PC-3 (cell line): ENCODE measurements at regions of chr5 and their contacts with region 1.

Region 1: GRCh38 chr5:90386099-90386710 is 23.4 kb downstream of the CETN3 start:
- DNase-seq: peak; percentile 70
- ATAC-seq: no peak; the same call in 1 of the 2 replicates
- H3K4me3 ChIP-seq: no peak overlapping the region
- H3K27ac ChIP-seq: no peak overlapping the region
- H3K4me1 ChIP-seq: peaks cover 9% of the 10 kb centered on the region
- H3K27me3 ChIP-seq: no peaks in the 10 kb centered on the region
- CTCF ChIP-seq: peak; percentile 72

Region 2: GRCh38 chr5:88826646-88827585 is 1559.3 kb before region 1 on chr5:
- CTCF ChIA-PET with region 1: no interaction called
- POLR2A ChIA-PET with region 1: no interaction called
- intact Hi-C with region 1: no loop called
- DNase-seq: peak; percentile 70
- ATAC-seq: peak; percentile 72
- H3K4me3 ChIP-seq: no peak overlapping the region
- H3K27ac ChIP-seq: peak overlapping the region; percentile 76
- H3K4me1 ChIP-seq: peaks cover 30% of the 10 kb centered on the region
- H3K27me3 ChIP-seq: no peaks in the 10 kb centered on the region
- CTCF ChIP-seq: no peak

Region 3: DNA sequence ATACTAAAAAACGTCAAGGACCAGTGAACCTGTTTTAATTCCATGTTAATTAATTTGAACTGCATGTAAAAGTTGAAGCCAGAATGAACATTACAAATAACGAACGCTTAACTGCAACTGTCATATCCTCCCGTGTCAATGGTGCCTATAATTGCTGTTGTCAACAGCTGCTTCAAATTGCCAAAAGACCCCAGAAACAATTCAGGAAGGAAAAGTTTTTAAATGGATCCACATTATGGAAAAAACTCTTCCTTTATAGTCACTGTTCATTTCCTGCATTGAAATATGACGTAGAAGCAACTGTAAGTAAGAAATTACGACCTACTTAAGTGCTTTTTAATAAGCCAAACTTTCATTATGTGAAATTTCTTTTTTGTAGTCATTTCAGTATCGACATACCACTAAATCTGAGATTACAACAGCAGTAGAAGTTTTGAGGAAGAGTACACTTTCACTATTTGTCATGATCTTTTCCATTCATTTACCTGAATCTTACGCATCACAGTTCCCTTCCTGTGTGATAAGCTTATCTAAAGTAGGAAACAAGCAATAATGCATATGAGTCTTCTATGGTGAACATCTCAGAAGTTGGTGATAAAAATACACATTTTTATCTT is 1541.0 kb before region 1 on chr5:
- CTCF ChIA-PET with region 1: no interaction called
- POLR2A ChIA-PET with region 1: no interaction called
- intact Hi-C with region 1: loop called (anchors 10 kb)
- DNase-seq: no peak
- ATAC-seq: no peak
- H3K4me3 ChIP-seq: no peak overlapping the region
- H3K27ac ChIP-seq: no peak overlapping the region
- H3K4me1 ChIP-seq: no peaks in the 10 kb centered on the region
- H3K27me3 ChIP-seq: no peaks in the 10 kb centered on the region
- CTCF ChIP-seq: no peak

Region 4: GRCh38 chr5:89930591-89931392 is 455.4 kb before region 1 on chr5:
- CTCF ChIA-PET with region 1: no interaction called
- POLR2A ChIA-PET with region 1: no interaction called
- intact Hi-C with region 1: loop called (anchors 5 kb)
- DNase-seq: peak; percentile 96
- ATAC-seq: peak; percentile 94
- H3K4me3 ChIP-seq: peak overlapping the region; percentile 10; the same call in 1 of the 2 replicates
- H3K27ac ChIP-seq: peak overlapping the region; percentile 52
- H3K4me1 ChIP-seq: peaks cover 21% of the 10 kb centered on the region
- H3K27me3 ChIP-seq: no peaks in the 10 kb centered on the region
- CTCF ChIP-seq: no peak

Region 5: DNA sequence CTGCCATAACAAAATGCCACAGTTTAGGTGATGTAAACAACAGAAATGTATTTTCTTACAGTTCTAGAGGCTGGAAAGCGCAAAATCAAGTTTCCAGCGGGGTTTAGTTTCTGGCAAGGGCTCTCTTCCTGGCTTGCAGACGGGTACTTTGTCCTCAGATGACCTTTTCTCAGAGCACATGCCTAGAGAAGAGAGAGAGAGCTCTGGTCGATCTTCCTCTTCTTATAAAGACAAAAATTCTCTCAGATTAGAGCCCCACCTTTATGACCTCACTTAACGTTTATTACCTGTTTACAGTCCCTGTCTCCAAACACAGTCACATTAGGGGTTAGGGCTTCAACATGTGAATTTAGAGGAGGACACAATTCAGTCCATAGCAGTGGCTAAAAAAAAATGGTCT is 96.4 kb before region 1 on chr5:
- CTCF ChIA-PET with region 1: interaction called, 4 read pairs
- POLR2A ChIA-PET with region 1: no interaction called
- intact Hi-C with region 1: loop called (anchors 1 kb)
- DNase-seq: no peak
- ATAC-seq: no peak
- H3K4me3 ChIP-seq: no peak overlapping the region
- H3K27ac ChIP-seq: no peak overlapping the region
- H3K4me1 ChIP-seq: peaks cover 7% of the 10 kb centered on the region; the same call in 1 of the 2 replicates
- H3K27me3 ChIP-seq: no peaks in the 10 kb centered on the region
- CTCF ChIP-seq: no peak

Region 6: DNA sequence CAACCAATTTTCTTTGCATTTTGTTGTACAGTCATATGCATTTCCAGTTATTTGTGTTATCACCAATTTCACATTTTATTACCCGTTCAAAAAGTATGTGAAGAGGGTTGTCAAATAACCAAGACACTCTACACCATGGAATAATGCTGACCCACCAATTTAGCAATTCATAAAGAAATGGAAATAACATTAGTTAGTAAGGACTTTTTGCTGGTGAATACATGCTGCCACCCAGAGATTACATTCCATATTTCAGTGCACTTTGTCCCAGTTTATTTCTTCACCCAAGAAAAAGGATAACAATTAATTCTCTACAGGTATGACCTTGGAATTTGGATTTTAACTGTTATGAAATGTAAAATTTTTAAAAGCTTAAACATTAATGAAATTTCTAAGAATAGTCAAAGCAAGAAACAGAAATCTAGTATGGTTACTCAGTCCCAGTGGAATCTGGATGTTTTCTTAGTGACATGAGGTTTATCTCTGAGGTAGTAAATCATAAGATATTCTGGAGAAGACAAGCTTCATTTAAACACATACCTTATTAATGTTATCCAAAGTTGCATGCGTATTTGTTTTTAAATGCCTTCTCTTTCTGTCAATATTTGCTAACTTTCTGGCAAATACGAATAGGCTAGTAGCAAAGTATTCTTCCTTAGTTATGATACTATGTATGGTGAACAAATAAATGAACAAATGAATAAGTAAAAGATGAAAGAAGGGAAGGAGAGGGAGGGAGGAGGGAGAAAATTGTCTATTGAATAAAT is 77.2 kb before region 1 on chr5:
- CTCF ChIA-PET with region 1: no interaction called
- POLR2A ChIA-PET with region 1: no interaction called
- intact Hi-C with region 1: loop called (anchors 5 kb)
- DNase-seq: peak; percentile 69
- ATAC-seq: peak; percentile 87
- H3K4me3 ChIP-seq: no peak overlapping the region
- H3K27ac ChIP-seq: no peak overlapping the region
- H3K4me1 ChIP-seq: peaks cover 14% of the 10 kb centered on the region
- H3K27me3 ChIP-seq: no peaks in the 10 kb centered on the region
- CTCF ChIP-seq: no peak; the same call in 1 of the 2 replicates